ENCODE measurements at regions of chr12 and their contacts with region 1.

Region 1: GRCh38 chr12:642633-643474 is 20.4 kb downstream of the NINJ2 start:
- DNase-seq: peak; percentile 63 to 76
- H3K4me3 ChIP-seq: peak overlapping the region; percentile 77
- H3K27ac ChIP-seq: peak overlapping the region; percentile 79
- H3K4me1 ChIP-seq: peaks cover 36% of the 10 kb centered on the region
- H3K27me3 ChIP-seq: no peaks in the 10 kb centered on the region
- CTCF ChIP-seq: peak; percentile 55

Region 2: GRCh38 chr12:530308-530707 is 112.5 kb before region 1 on chr12:
- CTCF ChIA-PET with region 1: no interaction called
- POLR2A ChIA-PET with region 1: no interaction called
- intact Hi-C with region 1: no loop called
- DNase-seq: peak in 1 of 2 experiments; percentile 33
- H3K4me3 ChIP-seq: no peak overlapping the region
- H3K27ac ChIP-seq: no peak overlapping the region
- H3K4me1 ChIP-seq: no peaks in the 10 kb centered on the region
- H3K27me3 ChIP-seq: no peaks in the 10 kb centered on the region
- CTCF ChIP-seq: no peak

Region 3: GRCh38 chr12:553205-554000 is 89.5 kb before region 1 on chr12:
- CTCF ChIA-PET with region 1: no interaction called
- POLR2A ChIA-PET with region 1: no interaction called
- intact Hi-C with region 1: no loop called
- DNase-seq: no peak
- H3K4me3 ChIP-seq: no peak overlapping the region
- H3K27ac ChIP-seq: no peak overlapping the region
- H3K4me1 ChIP-seq: peaks cover 5% of the 10 kb centered on the region; the same call in 1 of the 2 replicates
- H3K27me3 ChIP-seq: no peaks in the 10 kb centered on the region
- CTCF ChIP-seq: no peak

Region 4: DNA sequence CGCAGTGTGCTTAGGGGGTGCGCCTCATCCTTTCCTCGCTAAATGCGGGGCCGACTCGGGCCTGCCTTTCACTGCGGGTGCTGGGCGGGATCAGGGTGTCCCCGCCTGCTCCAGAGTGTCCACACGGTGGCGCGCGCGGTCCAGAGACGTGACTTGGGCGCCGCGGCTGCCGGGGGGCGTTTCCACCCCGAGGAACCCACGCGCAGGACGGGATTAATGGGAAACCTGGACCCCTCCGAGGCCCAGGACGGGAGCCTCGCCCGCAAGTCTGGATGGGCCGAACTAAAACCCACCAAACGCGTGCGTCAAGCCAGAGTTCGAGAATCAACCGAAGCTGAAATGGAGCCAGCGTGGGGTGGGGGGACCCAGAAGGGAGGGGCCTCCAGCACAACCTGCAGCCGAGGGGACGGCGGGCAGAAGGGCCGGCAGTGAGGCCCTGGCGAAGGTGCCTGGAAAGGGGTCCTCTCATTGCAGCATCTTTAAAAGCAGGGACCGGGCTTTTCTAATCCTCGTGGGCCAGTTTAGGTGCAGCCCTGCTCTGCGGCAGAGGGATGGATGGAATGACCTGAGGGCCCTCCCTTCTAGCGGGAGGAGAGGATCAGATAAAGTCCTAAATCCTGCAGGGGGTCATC is 72.9 kb before region 1 on chr12:
- CTCF ChIA-PET with region 1: interaction called, 5 read pairs
- POLR2A ChIA-PET with region 1: no interaction called
- intact Hi-C with region 1: loop called (anchors 2 kb)
- DNase-seq: peak; percentile 61 to 90
- H3K4me3 ChIP-seq: peak overlapping the region; percentile 77
- H3K27ac ChIP-seq: peak overlapping the region; percentile 84; the same call in 1 of the 2 replicates
- H3K4me1 ChIP-seq: peaks cover 25% of the 10 kb centered on the region
- H3K27me3 ChIP-seq: no peaks in the 10 kb centered on the region
- CTCF ChIP-seq: peak; percentile 94

Measured in PC-9 (cell line).